Sigmoid colon (tissue), 7 donors: ENCODE measurements at regions of chr3 and their contacts with region 1.

Region 1: DNA sequence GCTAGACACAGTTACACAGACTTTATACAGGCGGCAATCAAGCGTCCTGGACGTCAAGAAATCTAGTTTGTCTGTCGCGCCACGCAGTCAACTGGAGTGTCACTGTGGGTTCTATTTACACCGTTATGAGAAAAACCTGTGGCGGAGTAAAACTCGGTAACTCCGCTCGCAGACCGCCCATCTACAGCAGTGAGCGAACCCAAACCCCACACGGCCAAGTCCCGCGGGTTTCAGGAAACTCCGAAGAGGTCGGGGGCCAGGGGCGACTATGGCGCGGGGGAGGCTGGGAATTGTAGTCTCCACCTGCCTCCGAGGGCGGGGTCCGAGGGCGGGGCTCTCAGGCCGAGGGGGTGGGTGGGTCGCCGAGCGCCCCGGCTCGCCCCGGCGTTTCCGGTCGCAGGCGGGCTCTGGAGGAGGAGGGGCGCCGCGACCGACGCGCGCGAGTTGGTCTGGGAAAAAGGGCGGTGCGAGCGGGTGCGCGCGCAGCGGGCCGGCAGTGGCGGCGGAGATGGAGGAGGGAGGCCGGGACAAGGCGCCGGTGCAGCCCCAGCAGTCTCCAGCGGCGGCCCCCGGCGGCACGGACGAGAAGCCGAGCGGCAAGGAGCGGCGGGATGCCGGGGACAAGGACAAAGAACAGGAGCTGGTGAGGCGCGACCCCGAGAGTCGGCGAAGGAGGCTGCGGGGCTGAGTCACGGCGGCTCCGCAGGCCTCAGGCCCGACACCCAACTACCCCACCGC is at the start of gene PSMD2:
- DNase-seq: peak; percentile 99
- H3K4me3 ChIP-seq: peak within 1 kb of the TSS; percentile 92 to 97 (median 94)
- H3K27ac ChIP-seq: peak within 1 kb of the TSS; percentile 79 to 89 (median 84)
- H3K4me1 ChIP-seq: peaks cover 0 to 20% (median 15%) of the 10 kb centered on the region in 4 donors
- H3K27me3 ChIP-seq: no peaks in the 10 kb centered on the region
- CTCF ChIP-seq: no peak
- EP300 ChIP-seq: no peak
- POLR2A ChIP-seq: peak; percentile 52 to 69
- total RNA-seq, gene PSMD2: 127 to 246 (median 234) TPM

Region 2: DNA sequence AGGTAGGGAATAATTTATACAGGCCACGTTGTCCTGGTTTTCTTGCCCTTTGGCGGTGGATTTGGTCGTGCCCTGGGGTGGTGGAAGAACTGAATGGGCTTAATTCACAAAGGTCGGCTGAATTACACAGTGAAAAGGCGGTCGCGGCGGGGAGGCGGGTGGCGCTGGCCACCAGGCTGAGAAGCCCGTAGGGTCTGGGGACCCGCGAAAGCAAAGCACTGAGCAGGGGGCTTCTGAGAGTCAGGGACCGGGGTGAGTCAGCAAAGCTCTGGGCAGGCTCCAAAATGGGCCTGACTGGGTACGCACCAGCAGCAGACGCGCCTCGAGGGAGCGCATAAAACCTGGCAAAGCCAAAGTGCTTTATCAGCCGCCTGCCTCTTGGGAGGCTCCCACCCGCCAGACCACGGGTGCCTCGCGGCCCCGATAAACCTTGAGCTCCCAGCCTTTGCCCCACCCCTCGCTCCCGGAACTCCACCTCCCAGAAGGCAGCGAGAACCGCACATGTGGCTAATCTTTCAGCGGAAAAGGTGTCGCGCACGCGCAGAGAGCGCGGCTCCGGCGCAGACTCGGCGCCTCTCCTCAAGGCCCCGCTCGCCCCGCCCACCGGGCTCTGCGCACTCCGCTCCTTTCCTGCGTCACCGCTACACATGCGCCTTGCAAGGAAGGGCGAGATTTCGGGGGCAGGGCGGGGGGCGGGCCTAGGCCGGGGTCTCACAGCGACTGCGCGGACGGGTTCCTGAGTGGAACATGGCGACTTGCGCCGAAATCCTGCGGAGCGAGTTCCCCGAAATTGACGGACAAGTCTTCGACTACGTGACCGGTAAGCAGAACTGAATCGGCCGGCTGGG is 113.2 kb before region 1 on chr3 and contains the start of gene ABCF3:
- intact Hi-C with region 1: loop called (anchors 5 kb)
- DNase-seq: peak; percentile 100
- H3K4me3 ChIP-seq: peak within 1 kb of the TSS; percentile 71 to 98 (median 96)
- H3K27ac ChIP-seq: peak within 1 kb of the TSS; percentile 87 to 90 (median 88)
- H3K4me1 ChIP-seq: peaks cover 0 to 37% (median 29%) of the 10 kb centered on the region in 4 donors
- H3K27me3 ChIP-seq: no peaks in the 10 kb centered on the region
- CTCF ChIP-seq: no peak
- EP300 ChIP-seq: peak in 1 of 4 donors; percentile 48
- POLR2A ChIP-seq: peak; percentile 62 to 84
- total RNA-seq, gene ABCF3: 32.4 to 51.3 (median 39.2) TPM

Region 3: DNA sequence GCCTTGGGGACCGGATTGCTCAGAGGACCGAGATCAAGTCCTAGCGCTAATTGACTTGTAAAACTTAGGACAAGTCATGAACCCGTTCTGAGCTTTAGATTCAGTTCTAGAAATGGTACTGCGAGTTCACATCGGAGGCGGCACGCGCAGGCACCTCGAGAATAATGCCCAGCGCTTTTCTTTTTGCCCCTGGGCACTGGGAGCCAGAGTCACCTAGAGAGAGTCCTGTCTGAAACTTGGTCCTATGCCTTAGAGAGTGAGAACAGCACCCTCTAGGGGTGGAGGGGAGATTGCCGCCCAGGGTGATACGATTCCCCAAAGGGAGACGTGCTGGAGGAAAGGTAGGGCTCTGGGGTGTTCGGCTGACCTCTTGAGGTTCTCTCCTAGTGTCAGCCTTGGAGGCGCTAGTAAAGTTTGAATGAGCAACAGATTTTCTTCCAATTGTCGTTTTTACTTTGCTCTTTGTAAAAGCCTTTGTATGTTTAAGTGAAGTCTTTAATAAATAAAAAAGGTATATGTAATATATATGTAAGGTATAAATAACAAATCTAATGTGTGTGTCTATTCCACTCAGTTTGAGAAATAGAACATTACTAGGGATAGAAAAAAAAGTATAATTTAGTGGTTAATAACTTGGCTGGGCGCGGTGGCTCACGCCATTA is 48.6 kb before region 1 on chr3:
- intact Hi-C with region 1: loop called (anchors 5 kb)
- DNase-seq: peak; percentile 88
- H3K4me3 ChIP-seq: peak overlapping the region; percentile 71 to 88 (median 81)
- H3K27ac ChIP-seq: peak overlapping the region; percentile 61 to 86 (median 84)
- H3K4me1 ChIP-seq: peaks cover 0 to 28% (median 15%) of the 10 kb centered on the region in 4 donors
- H3K27me3 ChIP-seq: no peaks in the 10 kb centered on the region
- CTCF ChIP-seq: peak; percentile 42 to 93 (median 86)
- EP300 ChIP-seq: no peak
- POLR2A ChIP-seq: no peak

Region 4: GRCh38 chr3:184261270-184261853 is 37.6 kb before region 1 on chr3 and contains the start of gene CAMK2N2:
- intact Hi-C with region 1: no loop called
- DNase-seq: no peak
- H3K4me3 ChIP-seq: peak within 1 kb of the TSS in 3 of 4 donors; percentile 28 to 45 (median 43)
- H3K27ac ChIP-seq: no peak within 1 kb of the TSS
- H3K4me1 ChIP-seq: peaks cover 0 to 34% (median 33%) of the 10 kb centered on the region in 4 donors
- H3K27me3 ChIP-seq: peaks cover 43 to 91% (median 67%) of the 10 kb centered on the region in 3 donors
- CTCF ChIP-seq: no peak
- EP300 ChIP-seq: no peak
- POLR2A ChIP-seq: no peak
- total RNA-seq, gene CAMK2N2: 0.71 TPM in 1 of 4 donors, not detected in the others

Region 5: DNA sequence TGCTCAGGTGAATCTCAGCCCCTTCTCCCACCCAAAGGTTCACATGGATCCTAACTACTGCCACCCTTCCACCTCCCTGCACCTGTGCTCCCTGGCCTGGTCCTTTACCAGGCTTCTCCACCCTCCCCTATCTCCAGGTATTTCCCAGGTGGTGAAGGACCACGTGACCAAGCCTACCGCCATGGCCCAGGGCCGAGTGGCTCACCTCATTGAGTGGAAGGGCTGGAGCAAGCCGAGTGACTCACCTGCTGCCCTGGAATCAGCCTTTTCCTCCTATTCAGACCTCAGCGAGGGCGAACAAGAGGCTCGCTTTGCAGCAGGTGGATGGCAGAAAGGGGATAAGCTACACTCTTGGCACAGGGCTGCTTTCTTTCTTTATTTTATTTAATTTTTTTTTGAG is 43.0 kb after region 1 on chr3:
- intact Hi-C with region 1: loop called (anchors 5 kb)
- DNase-seq: no peak
- H3K4me3 ChIP-seq: no peak overlapping the region
- H3K27ac ChIP-seq: no peak overlapping the region
- H3K4me1 ChIP-seq: peaks cover 3 to 46% (median 34%) of the 10 kb centered on the region in 4 donors
- H3K27me3 ChIP-seq: no peaks in the 10 kb centered on the region
- CTCF ChIP-seq: no peak
- EP300 ChIP-seq: no peak
- POLR2A ChIP-seq: no peak

Region 6: GRCh38 chr3:184362668-184363540 is 64.0 kb after region 1 on chr3:
- intact Hi-C with region 1: loop called (anchors 2 kb)
- DNase-seq: peak; percentile 98
- H3K4me3 ChIP-seq: peak overlapping the region; percentile 63 to 94 (median 86)
- H3K27ac ChIP-seq: peak overlapping the region; percentile 93 to 99 (median 98)
- H3K4me1 ChIP-seq: peaks cover 0 to 37% (median 34%) of the 10 kb centered on the region in 4 donors
- H3K27me3 ChIP-seq: no peaks in the 10 kb centered on the region
- CTCF ChIP-seq: peak; percentile 33 to 50 (median 44)
- EP300 ChIP-seq: no peak
- POLR2A ChIP-seq: peak; percentile 46 to 69

Region 7: DNA sequence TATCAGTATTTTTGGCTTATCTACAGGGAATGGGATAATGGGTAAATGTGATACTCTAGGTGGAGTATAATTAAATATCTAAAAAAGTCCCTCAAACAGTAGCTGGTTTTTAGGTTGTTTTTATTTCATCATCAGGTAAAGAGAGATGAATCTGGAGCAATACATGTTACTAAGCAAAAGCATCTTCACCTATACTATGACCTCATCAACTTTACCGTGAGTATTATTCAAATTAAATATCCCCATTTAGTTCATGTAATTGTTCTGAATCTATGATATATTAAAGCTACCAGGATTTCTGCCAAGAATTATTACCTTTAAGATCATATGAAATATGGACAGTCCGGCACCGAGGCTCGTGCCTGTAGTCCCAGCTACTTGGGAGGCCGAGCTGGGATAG is 560.9 kb after region 1 on chr3:
- intact Hi-C with region 1: no loop called
- DNase-seq: no peak
- H3K4me3 ChIP-seq: no peak overlapping the region
- H3K27ac ChIP-seq: no peak overlapping the region
- H3K4me1 ChIP-seq: no peaks in the 10 kb centered on the region
- H3K27me3 ChIP-seq: no peaks in the 10 kb centered on the region
- CTCF ChIP-seq: no peak
- EP300 ChIP-seq: no peak
- POLR2A ChIP-seq: no peak

Region 8: DNA sequence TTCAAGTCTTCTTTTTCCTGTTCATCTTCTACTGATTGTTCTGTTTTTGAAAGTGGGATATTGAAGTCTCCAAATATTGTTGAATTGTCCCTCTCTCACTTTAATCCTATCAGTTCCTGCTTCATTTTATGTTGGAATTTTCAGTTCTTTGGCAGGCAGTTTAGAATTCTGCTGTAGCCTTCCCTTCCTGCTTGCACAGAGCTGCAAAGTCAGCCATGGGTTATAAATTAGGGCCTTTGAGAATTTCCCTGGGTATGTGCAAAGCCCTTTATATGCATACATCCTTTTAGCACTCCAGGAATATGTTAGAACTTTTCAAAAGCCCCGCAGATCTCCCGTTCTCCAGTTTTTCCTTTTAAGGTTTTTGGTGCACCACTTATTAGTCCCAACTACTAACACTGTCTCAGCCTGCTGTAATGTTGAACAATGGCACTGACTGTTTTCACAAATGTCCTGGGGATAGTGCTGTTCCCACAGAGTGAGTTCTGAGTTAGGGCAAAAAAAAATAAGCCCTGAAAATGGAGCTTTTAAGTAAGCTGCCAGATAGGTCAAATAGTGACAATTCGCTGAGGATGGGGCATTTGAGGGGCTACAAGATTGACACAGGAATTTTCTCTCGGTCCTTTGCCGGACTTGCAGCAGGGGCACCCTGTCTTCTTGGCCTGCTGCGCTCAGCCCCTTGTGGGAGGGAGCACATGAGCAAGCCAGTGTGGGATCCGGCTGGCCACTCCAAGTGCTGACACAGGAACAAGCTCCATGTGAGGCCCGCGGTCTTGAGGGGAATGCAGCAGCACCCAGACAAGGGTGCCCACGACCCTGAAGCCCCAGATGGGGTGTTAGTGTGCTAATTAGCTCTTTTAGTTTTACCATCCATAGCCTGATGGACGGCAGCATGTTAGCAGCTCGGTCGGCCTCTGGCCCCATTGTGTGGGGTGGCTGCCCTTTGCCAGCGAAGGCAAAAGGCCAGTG is 609.0 kb after region 1 on chr3:
- intact Hi-C with region 1: no loop called
- DNase-seq: no peak
- H3K4me3 ChIP-seq: no peak overlapping the region
- H3K27ac ChIP-seq: peak overlapping the region in 2 of 4 donors; percentile 38 to 45
- H3K4me1 ChIP-seq: peaks cover 0 to 7% (median 2%) of the 10 kb centered on the region in 4 donors
- H3K27me3 ChIP-seq: no peaks in the 10 kb centered on the region
- CTCF ChIP-seq: no peak
- EP300 ChIP-seq: no peak
- POLR2A ChIP-seq: no peak